PC-3 (cell line): ENCODE measurements at regions of chr4 and their contacts with region 1.

Region 1: GRCh38 chr4:35934320-35934981 is 309.9 kb downstream of the ARAP2 start:
- DNase-seq: peak; percentile 65
- ATAC-seq: no peak
- H3K4me3 ChIP-seq: no peak overlapping the region
- H3K27ac ChIP-seq: no peak overlapping the region
- H3K4me1 ChIP-seq: no peaks in the 10 kb centered on the region
- H3K27me3 ChIP-seq: no peaks in the 10 kb centered on the region
- CTCF ChIP-seq: peak; percentile 63

Region 2: DNA sequence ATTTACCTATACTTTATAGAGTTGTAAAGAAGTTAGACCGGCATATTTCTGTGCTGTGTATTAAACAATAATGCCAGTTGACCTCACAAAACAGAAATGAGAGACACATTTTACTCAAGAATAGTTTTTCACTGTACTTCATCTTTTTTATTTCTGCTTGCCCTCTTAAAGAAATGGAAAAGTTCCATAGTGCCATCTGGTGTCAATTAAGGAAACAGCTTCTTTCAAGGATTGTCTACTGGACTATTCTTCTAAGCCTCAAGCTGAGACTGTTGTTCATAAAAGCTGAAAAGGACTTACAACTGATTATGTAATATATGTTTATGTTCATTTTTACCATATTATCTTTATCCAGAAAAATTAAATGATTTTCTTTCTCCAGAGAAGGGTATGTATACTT is 1213.9 kb before region 1 on chr4:
- CTCF ChIA-PET with region 1: no interaction called
- POLR2A ChIA-PET with region 1: no interaction called
- intact Hi-C with region 1: loop called (anchors 10 kb)
- DNase-seq: peak; percentile 55
- ATAC-seq: peak; percentile 38
- H3K4me3 ChIP-seq: no peak overlapping the region
- H3K27ac ChIP-seq: no peak overlapping the region
- H3K4me1 ChIP-seq: no peaks in the 10 kb centered on the region
- H3K27me3 ChIP-seq: no peaks in the 10 kb centered on the region
- CTCF ChIP-seq: peak; percentile 63

Region 3: DNA sequence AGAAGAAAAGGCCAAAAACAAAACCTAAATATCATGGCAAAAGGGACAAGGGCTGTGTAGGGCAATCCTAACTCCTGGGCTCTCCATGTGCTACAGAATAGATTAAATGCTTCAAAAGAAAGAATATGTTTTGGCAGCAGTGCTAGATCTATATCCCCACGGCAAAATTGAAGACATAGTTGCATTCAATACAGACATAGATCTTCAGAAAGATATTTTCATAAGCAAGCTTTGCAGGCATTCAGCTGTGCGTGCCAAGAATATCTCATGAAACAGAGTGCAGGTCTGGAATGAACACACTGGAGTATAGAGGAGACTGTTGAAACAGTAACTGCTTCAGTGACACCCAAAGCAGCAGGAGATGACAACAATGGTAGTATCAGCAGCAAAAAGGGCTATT is 1167.0 kb before region 1 on chr4:
- CTCF ChIA-PET with region 1: no interaction called
- POLR2A ChIA-PET with region 1: no interaction called
- intact Hi-C with region 1: loop called (anchors 1 kb)
- DNase-seq: no peak
- ATAC-seq: no peak
- H3K4me3 ChIP-seq: no peak overlapping the region
- H3K27ac ChIP-seq: no peak overlapping the region
- H3K4me1 ChIP-seq: no peaks in the 10 kb centered on the region; the same call in 1 of the 2 replicates
- H3K27me3 ChIP-seq: no peaks in the 10 kb centered on the region
- CTCF ChIP-seq: no peak

Region 4: DNA sequence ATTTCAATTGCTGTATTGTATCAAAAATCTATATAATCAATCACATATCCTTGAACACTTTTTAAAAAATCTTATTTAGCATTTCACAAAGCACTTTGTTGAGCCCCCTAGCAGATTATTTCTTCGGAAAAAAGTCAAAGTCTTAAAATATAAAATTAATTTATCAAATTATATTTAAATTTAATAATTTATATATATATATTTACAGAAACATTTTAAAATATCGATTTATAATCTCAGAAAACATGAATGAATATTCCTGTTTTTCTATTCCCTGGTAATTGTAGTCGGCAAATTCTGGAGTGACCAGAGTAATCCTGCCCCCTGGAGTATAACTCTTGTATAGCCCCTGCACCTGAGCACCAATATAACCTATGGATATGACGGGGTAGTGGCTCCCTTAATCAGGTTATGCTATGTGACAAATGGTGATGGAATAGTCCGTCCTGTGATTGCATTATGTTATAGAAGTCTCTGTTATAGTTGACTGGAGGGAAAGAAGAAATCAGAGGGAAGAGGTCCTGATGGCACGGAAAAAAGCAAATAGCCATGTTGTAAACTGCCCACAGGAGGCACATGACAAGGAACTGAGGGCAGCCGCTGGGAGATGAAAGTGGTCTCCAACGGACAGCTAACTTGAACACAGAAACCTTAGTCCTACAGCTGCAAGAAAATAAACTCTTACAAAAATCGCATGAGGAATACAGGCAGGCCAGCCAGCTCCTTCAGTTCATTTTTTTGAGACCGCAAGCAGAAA is 782.5 kb before region 1 on chr4:
- CTCF ChIA-PET with region 1: no interaction called
- POLR2A ChIA-PET with region 1: no interaction called
- intact Hi-C with region 1: loop called (anchors 10 kb)
- DNase-seq: peak; percentile 67
- ATAC-seq: peak; percentile 58; the same call in 1 of the 2 replicates
- H3K4me3 ChIP-seq: no peak overlapping the region
- H3K27ac ChIP-seq: no peak overlapping the region
- H3K4me1 ChIP-seq: no peaks in the 10 kb centered on the region
- H3K27me3 ChIP-seq: no peaks in the 10 kb centered on the region
- CTCF ChIP-seq: peak; percentile 67

Region 5: DNA sequence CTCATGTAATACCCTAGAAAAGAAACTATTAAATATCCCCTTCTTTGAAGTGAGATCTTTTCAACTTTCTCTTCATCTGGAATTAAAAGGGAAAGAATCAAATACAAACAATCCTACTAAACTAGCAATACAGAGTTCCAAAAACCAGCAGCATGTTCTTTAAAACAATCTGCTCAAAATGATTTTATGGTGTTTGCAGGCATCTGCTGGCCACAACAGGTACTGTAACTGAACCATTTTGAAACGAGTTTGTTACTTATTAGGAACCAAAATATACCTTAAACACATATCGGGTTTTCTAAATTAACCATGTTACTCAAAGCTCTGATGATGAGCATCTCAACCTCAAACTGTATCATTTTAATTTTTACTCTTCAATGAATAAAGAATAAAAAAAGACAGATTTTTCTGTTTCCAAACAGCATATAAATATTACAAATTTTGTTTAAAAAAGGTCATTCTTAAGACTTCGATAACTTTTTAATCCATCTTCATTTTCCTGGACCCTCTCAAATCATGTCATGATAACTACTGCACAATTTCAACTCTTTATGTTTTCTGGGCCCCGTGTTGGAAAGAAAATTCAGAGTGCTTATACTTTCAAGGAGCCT is 253.4 kb after region 1 on chr4:
- CTCF ChIA-PET with region 1: no interaction called
- POLR2A ChIA-PET with region 1: no interaction called
- intact Hi-C with region 1: loop called (anchors 5 kb)
- DNase-seq: peak; percentile 47
- ATAC-seq: no peak
- H3K4me3 ChIP-seq: no peak overlapping the region
- H3K27ac ChIP-seq: no peak overlapping the region
- H3K4me1 ChIP-seq: no peaks in the 10 kb centered on the region
- H3K27me3 ChIP-seq: no peaks in the 10 kb centered on the region
- CTCF ChIP-seq: peak; percentile 77